ENCODE measurements at regions of chr1 and their contacts with region 1.

Region 1: GRCh38 chr1:6343506-6344405 is 49.8 kb downstream of the ACOT7 start:
- DNase-seq: peak; percentile 45
- H3K4me3 ChIP-seq: no peak overlapping the region
- CTCF ChIP-seq: peak; percentile 98

Region 2: GRCh38 chr1:6235296-6235677 is 108.5 kb before region 1 on chr1:
- CTCF ChIA-PET with region 1: interaction called, 14 read pairs
- POLR2A ChIA-PET with region 1: no interaction called
- DNase-seq: no peak
- H3K4me3 ChIP-seq: peak overlapping the region; percentile 73
- CTCF ChIP-seq: no peak

Region 3: DNA sequence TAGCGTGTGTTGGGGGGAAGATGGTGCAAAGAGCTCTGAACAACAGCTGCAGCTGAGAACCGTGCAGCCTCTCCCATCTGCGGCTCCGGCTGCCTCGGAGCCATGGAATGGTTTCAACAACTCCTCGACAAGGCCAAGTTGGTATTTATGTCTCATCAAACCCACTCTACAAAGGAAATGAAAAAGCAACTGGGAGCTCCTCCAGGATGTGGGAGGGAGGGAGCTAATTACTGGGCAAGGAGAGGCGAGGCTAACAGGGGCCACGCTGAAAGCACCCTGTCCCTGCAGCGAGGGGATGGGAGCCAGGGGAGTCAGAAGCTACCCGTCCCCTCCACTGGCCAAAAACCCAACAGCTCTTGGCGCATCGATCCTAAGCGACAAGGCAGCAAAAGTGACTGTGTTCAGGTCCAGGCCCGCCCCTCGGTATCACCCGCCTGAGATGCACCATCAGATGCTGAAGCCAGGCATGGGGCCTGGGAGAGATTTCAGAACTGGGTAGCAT is 13.3 kb before region 1 on chr1:
- CTCF ChIA-PET with region 1: interaction called, 74 read pairs
- POLR2A ChIA-PET with region 1: no interaction called
- DNase-seq: peak; percentile 24
- H3K4me3 ChIP-seq: no peak overlapping the region
- CTCF ChIP-seq: no peak

Region 4: DNA sequence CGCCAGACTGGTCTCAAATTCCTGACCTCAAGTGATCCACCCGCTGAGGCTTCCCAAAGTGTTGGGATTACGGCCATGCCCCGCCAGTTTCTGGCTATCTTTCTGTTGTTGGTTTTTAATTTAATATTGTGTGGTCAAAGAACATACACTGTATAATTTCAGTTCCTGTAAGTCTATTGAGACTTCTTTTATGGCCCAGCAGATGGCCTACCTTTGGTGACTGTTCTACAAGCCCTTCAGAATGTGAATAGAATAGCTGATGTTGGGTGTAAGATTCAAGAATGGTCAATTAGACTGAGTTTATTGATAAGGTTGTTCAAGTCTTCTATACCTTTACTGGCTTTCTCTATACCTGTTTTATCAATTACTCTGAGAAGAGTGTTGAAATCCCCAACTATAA is 65.3 kb after region 1 on chr1:
- CTCF ChIA-PET with region 1: interaction called, 10 read pairs
- POLR2A ChIA-PET with region 1: no interaction called
- DNase-seq: no peak
- H3K4me3 ChIP-seq: no peak overlapping the region
- CTCF ChIP-seq: no peak